ENCODE measurements at regions of chr10 and their contacts with region 1.

Region 1: DNA sequence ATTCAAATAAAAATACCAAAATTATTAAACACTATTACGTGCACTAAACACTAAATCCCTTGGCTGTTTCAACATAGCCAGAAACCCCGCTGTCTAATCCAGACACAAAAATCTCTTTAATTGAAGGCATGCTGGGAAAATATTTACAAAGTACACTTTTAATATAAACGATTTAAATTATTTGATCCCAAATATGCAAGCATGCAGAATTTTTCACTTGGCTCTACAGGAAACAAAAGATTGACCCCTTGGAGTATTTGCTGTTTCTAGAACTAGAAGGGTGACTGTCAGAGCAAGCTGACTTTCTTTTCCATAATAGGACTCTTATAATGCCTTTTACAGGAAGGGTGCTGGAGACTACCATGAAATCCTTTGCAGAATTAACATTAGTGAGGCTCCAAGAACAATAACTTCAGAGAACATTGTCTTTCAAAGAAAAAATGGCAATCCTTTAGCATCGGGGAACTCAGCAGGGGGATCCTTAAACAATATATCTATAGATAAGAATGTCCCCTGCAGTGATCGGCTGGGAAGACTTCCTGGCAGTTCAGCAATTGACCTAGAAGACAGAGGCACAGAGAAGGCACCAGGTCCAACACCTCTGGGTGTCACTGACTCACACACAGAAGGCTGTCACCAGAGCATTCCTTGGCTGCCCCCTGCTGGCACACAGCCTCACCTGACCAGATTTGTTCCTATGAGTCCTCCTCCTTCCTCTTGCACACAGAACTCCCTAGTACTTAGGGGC is 55.8 kb upstream of the MRLN start:
- DNase-seq: peak; percentile 91
- H3K4me3 Mint-ChIP-seq: no peak overlapping the region
- H3K27ac Mint-ChIP-seq: no peak overlapping the region
- H3K4me1 Mint-ChIP-seq: peaks cover 9% of the 10 kb centered on the region
- H3K27me3 Mint-ChIP-seq: no peaks in the 10 kb centered on the region

Region 2: GRCh38 chr10:59709395-59710125 is 99.5 kb before region 1 on chr10 and contains the start of gene SLC16A9:
- intact Hi-C with region 1: loop called (anchors 5 kb)
- DNase-seq: peak; percentile 90
- H3K4me3 Mint-ChIP-seq: peak within 1 kb of the TSS; percentile 84
- H3K27ac Mint-ChIP-seq: peak within 1 kb of the TSS; percentile 83
- H3K4me1 Mint-ChIP-seq: peaks cover 6% of the 10 kb centered on the region
- H3K27me3 Mint-ChIP-seq: peaks cover 59% of the 10 kb centered on the region
- total RNA-seq, gene SLC16A9: 4.4 and 4.5 TPM in 2 replicates

Region 3: DNA sequence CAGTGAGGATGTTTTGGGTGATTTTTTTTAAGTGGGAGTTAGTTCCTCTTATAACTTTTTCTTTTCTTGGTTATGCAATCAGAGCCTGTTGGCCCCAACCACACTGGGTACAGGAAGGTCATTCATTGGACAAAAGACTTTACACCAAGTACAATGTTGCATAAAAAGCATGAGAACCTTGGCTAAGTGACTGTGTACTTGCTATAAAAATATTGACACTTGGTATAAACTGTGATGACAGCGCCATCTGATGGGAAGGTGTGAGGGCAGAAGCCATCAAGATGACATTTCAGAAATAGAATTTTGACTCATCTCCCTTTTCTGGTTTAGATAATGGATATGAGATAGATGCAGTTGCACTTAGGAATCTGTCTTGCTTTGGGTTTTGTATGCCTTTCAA is 223.7 kb after region 1 on chr10:
- intact Hi-C with region 1: loop called (anchors 2 kb)
- DNase-seq: peak; percentile 79
- H3K4me3 Mint-ChIP-seq: no peak overlapping the region
- H3K27ac Mint-ChIP-seq: no peak overlapping the region
- H3K4me1 Mint-ChIP-seq: peaks cover 6% of the 10 kb centered on the region
- H3K27me3 Mint-ChIP-seq: no peaks in the 10 kb centered on the region